Dorsolateral prefrontal cortex (tissue), 120 donors: ENCODE measurements at regions of chr11 and their contacts with region 1.

Region 1: GRCh38 chr11:33829433-33830141 is 55.3 kb upstream of the FBXO3 start:
- DNase-seq: peak in 9 of 10 donors; percentile 34 to 80 (median 60)
- H3K4me3 ChIP-seq: peak overlapping the region; percentile 29 to 74 (median 55)
- H3K27ac ChIP-seq: no peak overlapping the region
- H3K27me3 ChIP-seq: peaks cover 0 to 30% (median 7%) of the 10 kb centered on the region in 45 donors
- CTCF ChIP-seq: peak; percentile 44 to 86 (median 73)

Region 2: DNA sequence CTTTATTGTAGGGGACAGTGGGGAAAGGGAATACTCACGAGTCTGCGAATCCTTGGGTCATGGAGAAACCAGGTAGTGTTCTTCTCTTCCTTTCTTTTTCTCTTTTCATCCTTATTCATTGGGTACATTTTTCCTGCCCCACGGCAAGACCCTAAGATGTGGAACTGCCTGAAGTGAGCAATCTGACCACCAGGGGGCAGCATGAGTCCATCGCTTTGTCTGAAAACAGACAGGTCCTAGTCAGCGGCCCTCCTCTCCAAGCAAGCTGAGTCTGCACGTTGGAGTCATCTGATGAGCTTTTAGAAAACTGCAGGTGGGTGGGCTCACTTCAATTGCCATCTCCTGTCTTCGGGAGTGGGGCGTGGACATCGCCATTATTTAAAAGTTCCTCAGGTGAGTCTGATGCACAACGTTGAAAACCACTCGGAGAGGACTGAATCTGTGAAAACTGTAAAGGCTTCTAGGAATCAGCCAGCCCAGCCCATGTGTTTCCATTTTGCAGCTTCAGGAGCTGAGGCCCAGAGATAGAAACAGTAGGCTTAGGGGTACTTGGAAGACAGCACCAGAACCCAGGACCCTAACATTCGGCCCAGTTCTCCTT is 21.3 kb before region 1 on chr11:
- intact Hi-C with region 1: loop called in 1 of 2 experiments (anchors 2 kb)
- DNase-seq: peak; percentile 77 to 93 (median 90)
- H3K4me3 ChIP-seq: peak overlapping the region in 1 of 59 donors; percentile 1
- H3K27ac ChIP-seq: no peak overlapping the region
- H3K27me3 ChIP-seq: peaks cover 0 to 4% (median 0%) of the 10 kb centered on the region in 45 donors
- CTCF ChIP-seq: peak; percentile 78 to 99 (median 95)

Region 3: GRCh38 chr11:34044664-34045485 is 215.3 kb after region 1 on chr11:
- intact Hi-C with region 1: loop called in 1 of 2 experiments (anchors 10 kb)
- DNase-seq: no peak
- H3K4me3 ChIP-seq: no peak overlapping the region
- H3K27ac ChIP-seq: no peak overlapping the region
- H3K27me3 ChIP-seq: no peaks in the 10 kb centered on the region
- CTCF ChIP-seq: no peak